ENCODE measurements at regions of chr22 and their contacts with region 1.

Region 1: DNA sequence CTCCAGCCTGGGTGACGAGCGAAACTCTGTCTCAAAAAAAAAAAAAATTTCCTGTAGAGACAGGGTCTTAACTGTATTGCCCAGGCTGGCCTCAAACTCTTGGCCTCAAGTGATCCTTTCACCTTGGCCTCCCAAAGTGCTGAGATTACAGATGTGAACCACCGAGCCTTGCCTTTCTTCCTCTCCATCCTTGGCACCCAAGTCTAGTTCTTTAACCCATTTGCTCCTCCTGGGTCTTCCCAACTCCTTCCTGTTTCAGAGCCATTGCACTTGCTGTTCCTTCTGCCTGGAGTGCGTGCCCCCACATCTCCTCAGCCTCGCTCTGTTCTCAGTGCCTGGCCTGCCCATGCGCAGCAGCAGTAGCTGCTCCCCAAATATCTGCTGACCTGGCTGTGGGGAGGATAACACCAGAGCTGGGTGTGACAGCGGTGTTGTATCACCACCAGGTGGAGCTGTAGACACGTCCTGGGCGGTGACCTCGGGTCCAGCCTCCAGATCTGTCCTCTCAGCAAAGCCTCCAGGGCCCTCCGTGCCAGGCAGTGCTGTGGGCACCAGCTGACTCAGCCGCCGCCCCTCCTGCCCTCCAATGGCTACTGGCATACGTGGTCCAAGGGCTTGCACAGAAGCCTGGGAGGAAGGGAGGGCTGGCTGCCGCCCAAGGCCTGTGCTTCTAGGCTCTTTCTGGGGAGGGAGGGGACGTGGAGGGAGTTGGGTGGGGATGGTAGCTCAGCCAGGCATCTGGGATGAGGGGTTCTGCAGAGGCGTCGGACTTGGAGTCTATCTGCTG is 22.0 kb downstream of the TEF start:
- DNase-seq: peak; percentile 86 to 96
- ATAC-seq: peak; percentile 93 to 99
- H3K4me3 ChIP-seq: no peak overlapping the region
- H3K27ac ChIP-seq: peak overlapping the region; percentile 40 to 91; a peak in 4 of 6 replicates
- H3K4me1 ChIP-seq: peaks cover 13% of the 10 kb centered on the region
- CTCF ChIP-seq: peak; percentile 79
- EP300 ChIP-seq: no peak
- POLR2A ChIP-seq: no peak
- RAD21 ChIP-seq: peak; percentile 85 to 92

Region 2: DNA sequence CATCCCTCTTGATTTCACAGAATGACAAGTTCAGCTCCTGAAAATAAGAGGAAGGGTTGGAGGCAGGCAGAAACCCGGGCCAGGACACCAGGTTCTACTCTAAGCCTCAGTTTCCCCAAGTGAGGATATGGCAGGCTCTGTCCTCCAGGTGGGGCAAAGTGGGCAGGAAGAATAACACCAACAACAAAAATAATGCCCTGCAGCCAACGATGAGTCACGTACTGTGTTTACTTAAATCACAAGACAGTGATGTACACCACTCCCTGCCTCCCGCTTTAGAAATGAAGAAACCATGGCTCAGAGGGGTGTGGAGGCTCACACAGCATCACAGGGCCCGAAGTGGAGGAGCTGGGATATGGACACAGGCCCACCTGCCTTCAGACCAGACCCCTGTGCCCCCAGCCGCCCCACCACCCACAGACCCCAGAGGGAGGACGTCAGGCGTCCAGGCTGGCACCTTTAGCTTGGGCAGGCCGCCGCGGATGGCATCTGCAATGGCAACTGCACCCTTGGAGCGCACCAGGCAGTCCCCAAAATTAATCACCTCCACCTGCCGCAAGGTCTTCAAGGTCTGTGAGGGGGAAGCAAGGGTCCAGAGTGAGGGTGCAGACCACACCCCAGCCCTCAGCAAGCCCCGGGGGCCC is 147.3 kb before region 1 on chr22:
- CTCF ChIA-PET with region 1: no interaction called
- POLR2A ChIA-PET with region 1: no interaction called
- DNase-seq: peak; percentile 59 to 66
- ATAC-seq: peak; percentile 79 to 80
- H3K4me3 ChIP-seq: no peak overlapping the region
- H3K27ac ChIP-seq: peak overlapping the region; percentile 34 to 82; a peak in 5 of 6 replicates
- H3K4me1 ChIP-seq: peaks cover 21% of the 10 kb centered on the region
- CTCF ChIP-seq: no peak
- EP300 ChIP-seq: no peak
- POLR2A ChIP-seq: no peak
- RAD21 ChIP-seq: no peak

Region 3: DNA sequence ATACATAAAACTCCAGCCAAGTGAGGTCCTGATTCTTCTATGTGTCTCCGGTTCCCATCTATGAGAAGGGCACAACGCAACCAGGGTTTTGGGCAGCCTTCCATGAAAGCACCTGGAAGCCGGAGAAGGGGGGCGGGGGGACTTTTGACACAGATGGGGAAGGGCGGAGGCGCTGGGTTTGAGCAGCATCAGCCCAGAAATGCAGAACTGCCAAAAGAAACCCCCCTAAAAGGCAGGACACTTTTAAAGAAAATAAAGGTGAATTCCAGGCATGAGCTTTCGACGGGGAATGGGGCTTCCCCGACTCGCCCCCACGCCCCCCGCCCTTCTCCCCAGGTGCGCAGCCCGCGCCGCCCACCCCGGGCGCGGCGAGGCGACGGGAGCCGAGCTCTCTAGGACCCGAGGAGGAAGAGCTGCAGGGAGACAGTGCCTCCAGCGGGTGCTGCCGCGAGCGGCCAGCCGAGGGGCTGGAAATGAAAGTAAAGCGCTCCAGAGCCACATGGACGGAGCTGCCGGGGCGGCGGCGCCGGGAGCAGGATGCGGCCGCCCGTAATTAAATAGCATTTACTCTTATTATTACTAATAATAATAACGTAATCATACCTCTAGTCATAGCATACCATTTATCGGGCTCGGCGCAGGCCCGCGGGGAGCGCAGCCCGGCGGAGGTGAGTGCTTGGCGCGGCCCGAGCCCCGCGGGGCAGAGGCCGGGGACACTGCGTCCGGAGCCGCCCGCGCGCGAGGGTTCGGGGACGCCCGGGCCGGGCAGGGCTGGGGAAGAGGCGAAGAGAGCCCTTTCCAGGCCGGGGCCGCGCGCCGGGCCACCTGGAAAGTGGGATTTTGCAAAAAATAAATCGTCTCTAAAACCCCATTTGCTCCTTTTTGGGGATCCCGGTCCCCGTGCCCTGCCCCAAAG is 102.4 kb before region 1 on chr22 and contains the start of gene ZC3H7B:
- CTCF ChIA-PET with region 1: no interaction called
- POLR2A ChIA-PET with region 1: no interaction called
- DNase-seq: peak; percentile 69 to 92
- ATAC-seq: peak; percentile 98 to 99
- H3K4me3 ChIP-seq: peak within 1 kb of the TSS; percentile 98
- H3K27ac ChIP-seq: peak within 1 kb of the TSS; percentile 98
- H3K4me1 ChIP-seq: peaks cover 20% of the 10 kb centered on the region
- CTCF ChIP-seq: peak; percentile 32; the same call in 2 of the 3 replicates
- EP300 ChIP-seq: no peak
- POLR2A ChIP-seq: peak; percentile 54
- RAD21 ChIP-seq: peak; percentile 39 to 54; a peak in 4 of 5 replicates
- polyA plus RNA-seq, gene ZC3H7B: 12.4 and 13.5 TPM in 2 replicates

Region 4: GRCh38 chr22:41381329-41382097 is 22.2 kb before region 1 on chr22 and contains the start of gene TEF:
- CTCF ChIA-PET with region 1: interaction called, 12 read pairs
- POLR2A ChIA-PET with region 1: interaction called, 27 read pairs
- DNase-seq: peak; percentile 97
- ATAC-seq: peak; percentile 91 to 97
- H3K4me3 ChIP-seq: peak within 1 kb of the TSS; percentile 99
- H3K27ac ChIP-seq: peak within 1 kb of the TSS; percentile 96 to 98
- H3K4me1 ChIP-seq: peaks cover 13% of the 10 kb centered on the region; the same call in 2 of the 3 replicates
- CTCF ChIP-seq: no peak
- EP300 ChIP-seq: no peak
- POLR2A ChIP-seq: no peak
- RAD21 ChIP-seq: no peak
- polyA plus RNA-seq, gene TEF: 2.8 and 4.3 TPM in 2 replicates

Region 5: GRCh38 chr22:41448189-41448808 is 44.6 kb after region 1 on chr22:
- CTCF ChIA-PET with region 1: interaction called, 6 read pairs
- POLR2A ChIA-PET with region 1: interaction called, 18 read pairs
- DNase-seq: peak; percentile 87 to 98
- ATAC-seq: peak; percentile 76 to 85
- H3K4me3 ChIP-seq: peak overlapping the region; percentile 96
- H3K27ac ChIP-seq: peak overlapping the region; percentile 100
- H3K4me1 ChIP-seq: peaks cover 10% of the 10 kb centered on the region
- CTCF ChIP-seq: no peak
- EP300 ChIP-seq: no peak
- POLR2A ChIP-seq: no peak; the same call in 1 of the 2 replicates
- RAD21 ChIP-seq: no peak

Region 6: GRCh38 chr22:41501209-41501608 is 97.5 kb after region 1 on chr22:
- CTCF ChIA-PET with region 1: interaction called, 11 read pairs
- POLR2A ChIA-PET with region 1: no interaction called
- DNase-seq: peak; percentile 33 to 44
- ATAC-seq: peak; percentile 76 to 91; a peak in 5 of 6 replicates
- H3K4me3 ChIP-seq: no peak overlapping the region
- H3K27ac ChIP-seq: no peak overlapping the region
- H3K4me1 ChIP-seq: no peaks in the 10 kb centered on the region
- CTCF ChIP-seq: peak; percentile 20; the same call in 1 of the 3 replicates
- EP300 ChIP-seq: no peak
- POLR2A ChIP-seq: no peak
- RAD21 ChIP-seq: peak; percentile 38 to 51; a peak in 3 of 5 replicates

Region 7: DNA sequence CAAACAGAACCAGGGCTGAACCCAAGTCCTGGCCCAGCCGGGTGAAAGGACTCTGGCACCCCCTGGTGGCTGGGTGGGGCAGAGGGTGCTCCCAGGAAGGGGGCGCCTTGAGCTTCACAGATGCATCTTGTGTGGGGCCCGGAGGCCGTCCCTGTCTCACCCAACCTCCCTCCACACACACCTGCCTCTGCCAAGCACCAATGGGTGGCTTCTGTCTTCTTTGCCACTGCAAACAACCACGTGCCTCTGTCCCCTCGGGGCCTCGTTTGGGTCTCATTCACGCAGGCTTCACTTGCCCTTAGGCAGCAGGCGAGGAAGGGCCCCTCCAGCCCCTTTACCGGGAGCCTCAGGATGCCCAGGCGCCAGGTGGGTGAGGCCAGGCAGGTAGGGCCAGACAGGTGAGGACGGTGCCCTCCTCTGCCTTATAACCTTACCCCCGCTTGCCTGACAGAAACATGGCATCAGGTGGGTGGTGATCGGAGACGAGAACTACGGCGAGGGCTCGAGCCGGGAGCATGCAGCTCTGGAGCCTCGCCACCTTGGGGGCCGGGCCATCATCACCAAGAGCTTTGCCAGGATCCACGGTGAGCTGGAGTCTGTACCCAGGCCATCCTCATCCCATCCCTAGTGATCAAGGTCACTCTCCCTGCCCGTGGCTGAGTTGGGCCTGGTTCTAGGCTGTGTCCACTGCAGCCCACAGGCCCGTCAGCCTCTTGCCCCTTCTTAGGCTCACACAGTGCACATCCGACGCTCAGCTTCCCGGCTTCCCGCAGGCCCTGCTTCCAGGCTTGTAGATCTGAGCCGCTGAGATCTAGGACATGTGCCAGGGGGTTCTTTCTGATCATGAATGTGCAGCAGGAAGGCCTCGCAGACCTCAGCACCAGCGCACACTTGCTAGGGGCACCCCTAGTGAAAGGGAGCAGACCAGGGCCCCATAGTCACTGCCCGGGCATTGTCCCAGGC is 123.4 kb after region 1 on chr22:
- CTCF ChIA-PET with region 1: interaction called, 196 read pairs
- POLR2A ChIA-PET with region 1: interaction called, 4 read pairs
- DNase-seq: peak; percentile 36 to 66
- ATAC-seq: peak; percentile 54 to 71
- H3K4me3 ChIP-seq: no peak overlapping the region
- H3K27ac ChIP-seq: no peak overlapping the region
- H3K4me1 ChIP-seq: no peaks in the 10 kb centered on the region
- CTCF ChIP-seq: peak; percentile 68
- EP300 ChIP-seq: no peak
- POLR2A ChIP-seq: no peak
- RAD21 ChIP-seq: peak; percentile 49 to 50

Measured in A549 (cell line).